ENCODE measurements at regions of chr6 and their contacts with region 1.

Region 1: GRCh38 chr6:24991810-24992467 is 56.2 kb upstream of the RIPOR2 start:
- DNase-seq: peak; percentile 81
- H3K4me3 Mint-ChIP-seq: peak overlapping the region; percentile 11
- H3K27ac Mint-ChIP-seq: peak overlapping the region; percentile 76
- H3K4me1 Mint-ChIP-seq: peaks cover 68% of the 10 kb centered on the region
- H3K27me3 Mint-ChIP-seq: no peaks in the 10 kb centered on the region

Region 2: GRCh38 chr6:24848461-24848860 is 143.5 kb before region 1 on chr6:
- CTCF ChIA-PET with region 1: interaction called, 191 read pairs
- POLR2A ChIA-PET with region 1: no interaction called
- intact Hi-C with region 1: no loop called
- DNase-seq: no peak
- H3K4me3 Mint-ChIP-seq: no peak overlapping the region
- H3K27ac Mint-ChIP-seq: peak overlapping the region; percentile 33
- H3K4me1 Mint-ChIP-seq: peaks cover 37% of the 10 kb centered on the region
- H3K27me3 Mint-ChIP-seq: no peaks in the 10 kb centered on the region

Region 3: GRCh38 chr6:24883618-24884017 is 108.3 kb before region 1 on chr6:
- CTCF ChIA-PET with region 1: interaction called, 23 read pairs
- POLR2A ChIA-PET with region 1: interaction called, 4 read pairs
- intact Hi-C with region 1: loop called (anchors 1 kb)
- DNase-seq: peak; percentile 62
- H3K4me3 Mint-ChIP-seq: peak overlapping the region; percentile 66
- H3K27ac Mint-ChIP-seq: peak overlapping the region; percentile 97
- H3K4me1 Mint-ChIP-seq: peaks cover 86% of the 10 kb centered on the region
- H3K27me3 Mint-ChIP-seq: no peaks in the 10 kb centered on the region

Region 4: DNA sequence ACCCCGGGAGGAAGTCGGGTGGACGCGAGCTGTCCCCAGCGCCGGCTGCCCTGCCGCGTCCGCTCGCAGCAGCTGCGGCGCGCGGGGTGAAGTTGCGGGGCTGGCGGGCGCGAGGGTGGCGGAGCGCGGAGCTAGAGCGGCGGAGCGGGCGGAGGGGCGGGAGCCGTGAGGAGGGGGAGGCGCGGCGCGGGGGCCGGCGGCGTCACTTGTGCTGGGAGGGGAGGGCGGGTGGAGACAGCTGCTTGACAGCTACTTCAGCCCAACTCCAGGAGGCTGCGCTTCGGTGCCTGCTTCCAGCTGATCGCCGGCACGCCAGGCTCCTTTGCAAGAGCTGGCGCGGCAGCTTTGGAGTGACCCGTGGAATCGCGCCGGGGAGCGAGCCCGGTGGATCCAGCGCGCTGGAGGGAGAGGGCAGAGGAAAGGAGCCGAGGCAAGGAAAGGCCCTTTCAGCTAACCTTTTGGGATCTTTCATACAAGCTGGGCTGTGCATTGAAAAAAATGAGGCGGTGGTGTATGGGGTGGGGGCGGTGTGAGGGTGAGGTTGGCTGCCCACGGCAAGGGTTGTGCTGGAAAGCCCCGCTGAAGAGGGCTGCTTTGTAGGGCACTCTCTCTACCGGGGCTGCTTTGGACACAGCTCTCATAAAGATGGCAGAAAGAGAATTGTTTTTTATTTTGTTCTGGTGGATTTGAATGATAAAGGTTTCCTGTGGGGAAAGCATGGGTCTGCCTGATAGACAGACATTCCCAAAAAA is 80.8 kb before region 1 on chr6:
- CTCF ChIA-PET with region 1: interaction called, 80 read pairs
- POLR2A ChIA-PET with region 1: interaction called, 3 read pairs
- intact Hi-C with region 1: no loop called
- DNase-seq: peak; percentile 70
- H3K4me3 Mint-ChIP-seq: peak overlapping the region; percentile 91
- H3K27ac Mint-ChIP-seq: peak overlapping the region; percentile 95
- H3K4me1 Mint-ChIP-seq: peaks cover 85% of the 10 kb centered on the region
- H3K27me3 Mint-ChIP-seq: no peaks in the 10 kb centered on the region

Region 5: DNA sequence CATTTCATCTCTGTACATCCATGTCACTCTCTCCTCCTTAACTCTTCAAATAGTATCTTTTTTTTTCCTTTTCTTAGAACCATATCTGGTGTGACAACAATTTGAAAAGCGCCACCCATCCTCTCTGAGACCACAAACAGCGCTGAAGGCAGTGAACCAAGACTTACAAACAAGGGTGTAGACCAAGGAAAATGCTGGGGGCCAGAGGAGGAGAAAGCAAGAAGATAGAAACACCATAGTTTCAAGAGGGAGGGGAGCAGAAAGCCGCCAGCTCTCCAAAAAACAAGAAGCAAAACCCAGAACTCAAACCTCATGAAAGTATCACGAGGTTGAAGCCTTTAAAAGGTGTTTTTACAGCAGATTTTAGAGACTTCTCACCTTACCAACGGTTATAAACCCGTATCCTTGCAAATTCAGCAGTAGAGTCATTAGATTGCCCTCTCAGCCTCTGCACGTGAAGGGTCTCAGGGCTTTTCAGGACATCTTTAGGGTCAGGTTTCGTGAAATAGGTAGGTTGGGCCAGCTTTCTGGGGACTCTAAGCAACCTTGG is 42.8 kb before region 1 on chr6:
- CTCF ChIA-PET with region 1: interaction called, 14 read pairs
- POLR2A ChIA-PET with region 1: no interaction called
- intact Hi-C with region 1: no loop called
- DNase-seq: peak; percentile 53
- H3K4me3 Mint-ChIP-seq: peak overlapping the region; percentile 22
- H3K27ac Mint-ChIP-seq: peak overlapping the region; percentile 73
- H3K4me1 Mint-ChIP-seq: peaks cover 61% of the 10 kb centered on the region
- H3K27me3 Mint-ChIP-seq: no peaks in the 10 kb centered on the region

Region 6: GRCh38 chr6:24980507-24981387 is 11.2 kb before region 1 on chr6:
- CTCF ChIA-PET with region 1: interaction called, 77 read pairs
- POLR2A ChIA-PET with region 1: interaction called, 6 read pairs
- intact Hi-C with region 1: no loop called
- DNase-seq: no peak
- H3K4me3 Mint-ChIP-seq: no peak overlapping the region
- H3K27ac Mint-ChIP-seq: no peak overlapping the region
- H3K4me1 Mint-ChIP-seq: peaks cover 60% of the 10 kb centered on the region
- H3K27me3 Mint-ChIP-seq: no peaks in the 10 kb centered on the region

Region 7: DNA sequence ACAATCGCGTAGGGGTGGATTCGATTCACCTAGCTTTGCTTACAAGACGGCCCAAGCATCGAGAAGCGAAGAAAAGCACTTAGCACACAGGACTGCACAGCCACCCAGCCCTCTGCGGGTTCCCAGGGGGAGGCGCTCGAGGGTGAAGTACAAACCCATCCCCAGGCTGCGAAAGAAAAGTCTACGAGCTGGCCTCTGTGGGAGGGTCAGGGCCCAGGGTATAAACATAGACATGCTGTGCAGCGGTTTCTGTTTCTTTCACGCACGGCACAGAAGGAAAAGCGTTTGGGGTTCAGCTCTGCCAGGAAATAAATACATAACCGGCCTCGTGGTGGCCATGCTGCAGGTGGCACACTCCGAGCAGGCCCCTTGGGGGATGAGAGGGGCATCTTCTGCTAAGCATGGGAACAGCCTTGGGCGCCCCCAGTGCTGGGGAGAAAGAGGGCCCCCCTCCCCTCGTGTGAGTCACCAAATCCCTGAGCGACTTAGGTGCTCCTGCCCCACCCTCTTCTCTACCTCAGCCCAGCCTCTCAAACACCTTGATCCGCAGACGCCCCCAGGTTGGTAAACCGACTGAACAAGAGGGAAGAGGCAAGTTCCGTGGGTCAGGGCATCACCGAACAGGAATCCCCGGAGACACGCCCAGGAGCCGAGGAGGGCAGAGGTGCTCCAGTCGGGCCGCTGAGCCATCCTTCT is 35.4 kb after region 1 on chr6:
- CTCF ChIA-PET with region 1: interaction called, 81 read pairs
- POLR2A ChIA-PET with region 1: no interaction called
- intact Hi-C with region 1: no loop called
- DNase-seq: peak; percentile 92
- H3K4me3 Mint-ChIP-seq: peak overlapping the region; percentile 70
- H3K27ac Mint-ChIP-seq: peak overlapping the region; percentile 96
- H3K4me1 Mint-ChIP-seq: peaks cover 75% of the 10 kb centered on the region
- H3K27me3 Mint-ChIP-seq: no peaks in the 10 kb centered on the region

Region 8: GRCh38 chr6:25682324-25682723 is 690.4 kb after region 1 on chr6:
- CTCF ChIA-PET with region 1: no interaction called
- POLR2A ChIA-PET with region 1: no interaction called
- intact Hi-C with region 1: no loop called
- DNase-seq: no peak
- H3K4me3 Mint-ChIP-seq: no peak overlapping the region
- H3K27ac Mint-ChIP-seq: no peak overlapping the region
- H3K4me1 Mint-ChIP-seq: no peaks in the 10 kb centered on the region
- H3K27me3 Mint-ChIP-seq: peaks cover 12% of the 10 kb centered on the region

Measured in activated CD4-positive, alpha-beta memory T cell treated with anti-CD3 and anti-CD28 coated beads for 36 hours (primary cell).